MCF 10A (cell line): ENCODE measurements at regions of chr2 and their contacts with region 1.

Region 1: GRCh38 chr2:38178547-38179419 is 102.8 kb upstream of the CYP1B1 start:
- DNase-seq: peak; percentile 83
- H3K4me3 Mint-ChIP-seq: peak overlapping the region; percentile 12
- H3K27ac Mint-ChIP-seq: peak overlapping the region; percentile 60
- H3K4me1 Mint-ChIP-seq: peaks cover 48% of the 10 kb centered on the region
- H3K27me3 Mint-ChIP-seq: no peaks in the 10 kb centered on the region
- CTCF ChIP-seq: no peak

Region 2: DNA sequence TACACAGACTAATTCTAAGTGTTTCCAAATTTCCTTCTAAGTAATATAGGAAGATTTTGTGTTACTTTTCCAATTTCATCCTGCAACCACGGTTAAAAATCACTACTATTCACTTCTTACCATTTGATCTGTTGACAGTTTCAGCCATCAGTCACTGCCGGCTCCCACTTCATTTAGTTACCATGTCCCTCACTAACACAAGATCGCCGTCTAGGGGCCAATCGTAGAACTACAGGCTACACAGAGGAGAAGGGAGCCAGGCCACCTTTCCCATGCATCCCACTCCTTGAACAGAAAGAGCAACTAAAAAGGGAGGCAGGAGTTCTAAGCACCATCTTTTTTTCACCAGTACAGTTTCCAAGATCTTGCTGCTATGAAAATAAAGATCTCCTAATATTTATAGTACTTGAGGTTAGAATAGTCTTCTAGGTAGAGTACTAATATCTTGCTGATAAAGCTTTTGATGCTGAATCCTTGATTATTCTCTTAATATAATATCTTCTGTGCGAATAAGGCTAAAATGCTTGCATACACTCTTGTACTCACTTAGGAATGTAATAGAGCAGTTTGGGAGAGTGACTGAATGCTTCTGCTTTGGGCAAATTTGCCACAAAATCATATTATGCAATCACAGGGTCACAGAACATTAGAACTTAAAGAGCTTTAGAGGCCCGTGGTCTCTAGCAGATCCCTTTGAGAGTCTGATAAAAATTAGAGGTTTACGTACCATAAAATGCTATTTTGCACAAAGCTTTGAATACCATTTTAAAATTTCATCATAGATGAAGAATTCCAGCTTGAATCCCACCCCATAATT is 63.4 kb before region 1 on chr2:
- CTCF ChIA-PET with region 1: interaction called, 5 read pairs
- POLR2A ChIA-PET with region 1: interaction called, 8 read pairs
- intact Hi-C with region 1: loop called (anchors 5 kb)
- DNase-seq: peak; percentile 94
- H3K4me3 Mint-ChIP-seq: no peak overlapping the region
- H3K27ac Mint-ChIP-seq: no peak overlapping the region
- H3K4me1 Mint-ChIP-seq: peaks cover 28% of the 10 kb centered on the region
- H3K27me3 Mint-ChIP-seq: no peaks in the 10 kb centered on the region
- CTCF ChIP-seq: peak; percentile 96

Region 3: DNA sequence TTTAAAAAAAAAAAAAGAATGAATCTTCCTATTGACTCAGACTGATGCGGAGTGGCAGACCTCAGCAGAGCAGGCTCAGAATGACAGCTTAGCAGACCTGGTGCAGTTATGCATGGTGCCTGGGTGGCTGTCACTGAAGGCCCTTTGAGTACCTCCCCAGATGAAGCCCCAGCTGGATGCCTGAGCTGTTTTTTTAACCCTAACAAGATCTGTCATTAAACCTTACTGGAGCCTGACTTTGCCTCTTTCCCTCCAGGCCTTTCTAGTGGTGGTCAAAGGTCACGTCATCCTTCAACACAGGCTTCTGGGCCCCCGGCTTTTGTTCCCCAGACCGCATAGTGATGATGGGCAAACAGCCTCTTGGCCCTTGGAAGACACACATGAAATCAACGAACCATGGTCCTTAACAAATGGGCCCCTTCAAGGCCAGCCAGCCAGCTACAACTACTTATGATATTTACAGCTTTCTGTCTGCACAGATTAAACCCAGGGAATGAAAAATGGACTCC is 35.5 kb after region 1 on chr2:
- CTCF ChIA-PET with region 1: interaction called, 4 read pairs
- POLR2A ChIA-PET with region 1: interaction called, 7 read pairs
- intact Hi-C with region 1: loop called (anchors 1 kb)
- DNase-seq: no peak
- H3K4me3 Mint-ChIP-seq: no peak overlapping the region
- H3K27ac Mint-ChIP-seq: peak overlapping the region; percentile 74
- H3K4me1 Mint-ChIP-seq: peaks cover 44% of the 10 kb centered on the region
- H3K27me3 Mint-ChIP-seq: no peaks in the 10 kb centered on the region
- CTCF ChIP-seq: no peak

Region 4: GRCh38 chr2:38284971-38285370 is 106.2 kb after region 1 on chr2:
- CTCF ChIA-PET with region 1: no interaction called
- POLR2A ChIA-PET with region 1: no interaction called
- intact Hi-C with region 1: no loop called
- DNase-seq: no peak
- H3K4me3 Mint-ChIP-seq: no peak overlapping the region
- H3K27ac Mint-ChIP-seq: no peak overlapping the region
- H3K4me1 Mint-ChIP-seq: no peaks in the 10 kb centered on the region
- H3K27me3 Mint-ChIP-seq: peaks cover 31% of the 10 kb centered on the region
- CTCF ChIP-seq: no peak

Region 5: DNA sequence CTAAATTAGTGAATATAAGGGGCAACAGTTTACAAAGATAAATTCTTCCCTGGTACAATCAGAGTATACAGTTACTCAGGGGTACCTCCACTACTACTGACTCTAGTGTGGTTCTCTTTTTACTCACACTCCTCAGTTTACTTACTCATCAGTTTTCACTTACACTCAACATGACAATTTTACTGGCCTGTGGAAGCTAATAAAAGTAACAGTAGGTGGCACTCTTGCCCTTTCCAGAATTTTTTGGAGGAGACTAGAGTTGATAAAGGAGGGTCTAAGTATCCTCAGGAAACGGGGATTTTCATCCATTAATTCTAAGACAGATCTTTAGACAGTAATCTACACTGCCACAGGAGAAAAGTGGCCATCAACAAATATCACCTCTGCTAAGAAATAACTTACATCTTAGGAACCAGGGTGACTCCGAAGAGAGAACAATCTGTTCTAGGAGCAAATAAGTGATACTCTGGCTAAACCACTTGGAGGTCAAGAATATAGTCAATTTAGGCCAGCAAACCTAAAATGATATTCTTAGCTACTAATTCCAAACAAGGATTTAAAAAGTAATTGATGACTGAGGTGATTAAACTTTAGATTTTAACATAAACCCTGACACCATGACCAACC is 137.0 kb after region 1 on chr2:
- CTCF ChIA-PET with region 1: no interaction called
- POLR2A ChIA-PET with region 1: no interaction called
- intact Hi-C with region 1: no loop called
- DNase-seq: peak; percentile 63
- H3K4me3 Mint-ChIP-seq: no peak overlapping the region
- H3K27ac Mint-ChIP-seq: no peak overlapping the region
- H3K4me1 Mint-ChIP-seq: no peaks in the 10 kb centered on the region
- H3K27me3 Mint-ChIP-seq: no peaks in the 10 kb centered on the region
- CTCF ChIP-seq: peak; percentile 75